Heart left ventricle (tissue), 16 donors: ENCODE measurements at regions of chr12 and their contacts with region 1.

Region 1: GRCh38 chr12:93174048-93174447 is 203.7 kb upstream of the NUDT4 start:
- DNase-seq: peak in 3 of 5 donors; percentile 30 to 49 (median 37)
- ATAC-seq: peak; percentile 73 to 85 (median 80)
- H3K4me3 ChIP-seq: no peak overlapping the region
- H3K27ac ChIP-seq: peak overlapping the region; percentile 31 to 89 (median 78)
- H3K4me1 ChIP-seq: peaks cover 0 to 60% (median 38%) of the 10 kb centered on the region in 12 donors
- H3K27me3 ChIP-seq: no peaks in the 10 kb centered on the region
- CTCF ChIP-seq: no peak
- POLR2A ChIP-seq: no peak

Region 2: DNA sequence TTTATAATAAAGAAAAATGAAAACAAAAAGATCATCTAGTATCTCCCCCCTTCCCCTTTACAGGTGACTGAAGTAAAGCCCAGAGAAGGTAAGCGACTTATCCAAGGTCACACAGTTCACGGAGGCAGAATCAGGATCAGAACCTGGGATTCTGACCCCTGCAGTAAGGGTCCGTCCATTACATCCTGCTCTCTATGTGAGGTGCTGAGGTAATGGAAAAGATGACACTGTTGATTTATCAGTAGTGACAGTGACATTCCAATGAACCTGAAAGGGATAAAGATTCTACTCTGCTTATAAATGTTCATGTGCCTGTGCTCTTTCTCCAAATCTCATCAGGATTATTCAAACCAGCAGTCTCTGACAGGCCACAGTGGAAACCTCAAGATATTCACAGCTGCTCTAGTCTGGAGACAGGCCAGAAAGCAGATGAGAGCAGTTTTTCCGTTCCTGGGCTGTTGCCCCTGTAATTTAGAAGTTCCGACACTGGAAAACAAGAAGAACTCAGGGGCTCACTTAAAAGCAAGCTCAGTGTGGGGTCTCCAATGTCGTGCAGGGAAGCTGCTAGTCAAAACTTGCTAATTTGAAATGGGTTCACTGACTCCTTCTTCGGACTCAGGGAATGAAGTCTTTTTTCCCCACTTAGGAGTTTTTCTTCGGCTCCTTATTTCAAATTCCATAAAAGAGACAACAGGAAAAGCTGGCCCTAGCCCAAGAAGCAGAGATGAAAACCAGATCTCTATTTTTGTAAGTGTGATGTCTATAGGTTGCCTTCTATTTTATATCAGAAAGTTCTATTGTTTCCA is 113.2 kb before region 1 on chr12:
- intact Hi-C with region 1: loop called in 1 of 10 experiments (anchors 5 kb)
- DNase-seq: peak in 4 of 5 donors; percentile 39 to 56 (median 48)
- ATAC-seq: peak; percentile 38 to 75 (median 60)
- H3K4me3 ChIP-seq: peak overlapping the region in 6 of 12 donors; percentile 2 to 35 (median 24)
- H3K27ac ChIP-seq: peak overlapping the region; percentile 62 to 94 (median 82)
- H3K4me1 ChIP-seq: peaks cover 0 to 40% (median 23%) of the 10 kb centered on the region in 12 donors
- H3K27me3 ChIP-seq: no peaks in the 10 kb centered on the region
- CTCF ChIP-seq: peak in 3 of 12 donors; percentile 30 to 32 (median 31)
- POLR2A ChIP-seq: no peak

Region 3: DNA sequence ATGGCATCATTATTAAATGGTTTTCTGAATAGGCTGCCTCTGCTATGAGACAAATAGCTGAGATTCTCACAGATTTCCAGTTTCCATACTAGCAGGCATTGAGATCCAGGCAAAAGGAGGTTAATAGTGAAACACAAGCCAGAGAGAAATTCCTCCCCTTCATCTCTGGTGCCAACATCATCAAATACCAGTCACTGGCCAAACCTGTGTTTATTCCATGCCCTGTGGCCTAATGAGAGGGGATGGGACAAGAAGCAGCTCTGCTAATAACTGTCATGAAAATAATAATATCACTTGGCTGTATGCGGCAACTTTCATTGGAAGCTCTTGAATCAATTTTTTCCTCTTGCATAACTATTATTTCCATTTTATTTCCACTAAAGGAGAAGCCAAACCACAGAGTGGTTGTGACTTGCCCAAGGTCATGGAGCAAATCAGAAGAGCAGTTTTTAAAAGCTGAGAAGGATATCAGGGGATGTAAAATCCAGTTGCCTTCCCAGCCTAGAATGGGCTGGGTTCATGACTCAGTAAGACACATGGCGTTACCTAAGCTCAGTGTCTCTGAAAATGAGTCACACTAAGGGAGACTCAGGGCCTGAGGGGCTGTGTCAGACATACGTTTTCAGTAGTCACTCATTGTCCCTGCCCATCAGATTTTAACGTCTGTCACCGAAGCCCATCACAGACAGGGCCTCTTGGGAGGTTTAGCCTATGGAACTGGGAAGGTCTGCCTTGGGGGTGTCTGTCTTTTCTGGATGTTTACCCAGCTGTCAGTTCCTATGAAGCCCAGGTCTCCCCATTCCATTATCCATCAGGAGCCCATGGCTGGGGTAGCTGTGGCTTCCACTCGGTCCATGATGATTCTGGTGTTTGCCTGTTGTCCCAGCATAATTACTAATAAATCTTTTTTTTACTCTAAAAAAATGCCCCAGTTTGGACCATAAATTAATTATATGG is 36.1 kb before region 1 on chr12:
- intact Hi-C with region 1: loop called in 2 of 10 experiments (anchors 5 kb)
- DNase-seq: no peak
- ATAC-seq: peak; percentile 39 to 79 (median 51)
- H3K4me3 ChIP-seq: no peak overlapping the region
- H3K27ac ChIP-seq: peak overlapping the region in 8 of 12 donors; percentile 23 to 61 (median 32)
- H3K4me1 ChIP-seq: peaks cover 0 to 40% (median 10%) of the 10 kb centered on the region in 12 donors
- H3K27me3 ChIP-seq: no peaks in the 10 kb centered on the region
- CTCF ChIP-seq: no peak
- POLR2A ChIP-seq: no peak

Region 4: GRCh38 chr12:93297032-93297431 is 123.0 kb after region 1 on chr12:
- intact Hi-C with region 1: loop called in 1 of 10 experiments (anchors 10 kb)
- DNase-seq: no peak
- ATAC-seq: peak in 1 of 4 donors; percentile 29
- H3K4me3 ChIP-seq: no peak overlapping the region
- H3K27ac ChIP-seq: peak overlapping the region in 9 of 12 donors; percentile 8 to 82 (median 43)
- H3K4me1 ChIP-seq: peaks cover 0 to 40% (median 13%) of the 10 kb centered on the region in 12 donors
- H3K27me3 ChIP-seq: no peaks in the 10 kb centered on the region
- CTCF ChIP-seq: no peak
- POLR2A ChIP-seq: no peak

Region 5: GRCh38 chr12:93315907-93316622 is 142.0 kb after region 1 on chr12:
- intact Hi-C with region 1: no loop called
- DNase-seq: no peak
- ATAC-seq: peak in 2 of 4 donors; percentile 36 to 50
- H3K4me3 ChIP-seq: no peak overlapping the region
- H3K27ac ChIP-seq: no peak overlapping the region
- H3K4me1 ChIP-seq: peaks cover 0 to 16% (median 0%) of the 10 kb centered on the region in 12 donors
- H3K27me3 ChIP-seq: no peaks in the 10 kb centered on the region
- CTCF ChIP-seq: no peak
- POLR2A ChIP-seq: no peak

Region 6: GRCh38 chr12:93378373-93379325 is 204.6 kb after region 1 on chr12:
- intact Hi-C with region 1: loop called in 4 of 10 experiments (anchors 5 kb)
- DNase-seq: peak in 4 of 5 donors; percentile 38 to 50 (median 46)
- ATAC-seq: peak in 1 of 4 donors; percentile 14
- H3K4me3 ChIP-seq: peak overlapping the region; percentile 57 to 97 (median 86)
- H3K27ac ChIP-seq: peak overlapping the region; percentile 78 to 97 (median 96)
- H3K4me1 ChIP-seq: peaks cover 0 to 68% (median 30%) of the 10 kb centered on the region in 12 donors
- H3K27me3 ChIP-seq: no peaks in the 10 kb centered on the region
- CTCF ChIP-seq: no peak
- POLR2A ChIP-seq: peak in 1 of 2 donors; percentile 17

Region 7: DNA sequence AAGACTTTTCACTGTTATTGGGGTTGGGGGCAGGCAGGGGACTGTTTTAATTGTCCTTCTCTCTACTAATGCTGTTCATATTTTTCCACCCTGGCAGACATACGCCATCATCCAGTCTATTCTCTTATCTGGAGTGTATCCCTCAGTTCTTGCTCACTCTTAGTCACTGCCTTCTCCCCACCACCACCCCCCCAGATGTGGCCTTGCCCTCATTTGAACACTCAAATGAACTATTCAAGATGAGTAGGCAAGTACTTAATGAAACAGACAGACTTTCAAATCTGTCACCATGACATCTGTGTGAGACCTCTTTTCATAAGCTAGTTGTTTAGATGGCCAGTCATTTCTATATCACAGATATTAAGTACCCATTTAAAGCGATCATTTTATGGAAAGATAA is 213.7 kb after region 1 on chr12:
- intact Hi-C with region 1: loop called in 1 of 10 experiments (anchors 5 kb)
- DNase-seq: no peak
- ATAC-seq: peak in 3 of 4 donors; percentile 15 to 59 (median 46)
- H3K4me3 ChIP-seq: no peak overlapping the region
- H3K27ac ChIP-seq: peak overlapping the region in 4 of 12 donors; percentile 3 to 45 (median 25)
- H3K4me1 ChIP-seq: peaks cover 0 to 80% (median 57%) of the 10 kb centered on the region in 12 donors
- H3K27me3 ChIP-seq: no peaks in the 10 kb centered on the region
- CTCF ChIP-seq: no peak
- POLR2A ChIP-seq: no peak